Left cardiac atrium (tissue), 4 donors: ENCODE measurements at regions of chr1 and their contacts with region 1.

Region 1: GRCh38 chr1:65002508-65003315 is 36.4 kb upstream of the JAK1 start:
- DNase-seq: peak; percentile 92
- ATAC-seq: peak; percentile 88 to 93

Region 2: DNA sequence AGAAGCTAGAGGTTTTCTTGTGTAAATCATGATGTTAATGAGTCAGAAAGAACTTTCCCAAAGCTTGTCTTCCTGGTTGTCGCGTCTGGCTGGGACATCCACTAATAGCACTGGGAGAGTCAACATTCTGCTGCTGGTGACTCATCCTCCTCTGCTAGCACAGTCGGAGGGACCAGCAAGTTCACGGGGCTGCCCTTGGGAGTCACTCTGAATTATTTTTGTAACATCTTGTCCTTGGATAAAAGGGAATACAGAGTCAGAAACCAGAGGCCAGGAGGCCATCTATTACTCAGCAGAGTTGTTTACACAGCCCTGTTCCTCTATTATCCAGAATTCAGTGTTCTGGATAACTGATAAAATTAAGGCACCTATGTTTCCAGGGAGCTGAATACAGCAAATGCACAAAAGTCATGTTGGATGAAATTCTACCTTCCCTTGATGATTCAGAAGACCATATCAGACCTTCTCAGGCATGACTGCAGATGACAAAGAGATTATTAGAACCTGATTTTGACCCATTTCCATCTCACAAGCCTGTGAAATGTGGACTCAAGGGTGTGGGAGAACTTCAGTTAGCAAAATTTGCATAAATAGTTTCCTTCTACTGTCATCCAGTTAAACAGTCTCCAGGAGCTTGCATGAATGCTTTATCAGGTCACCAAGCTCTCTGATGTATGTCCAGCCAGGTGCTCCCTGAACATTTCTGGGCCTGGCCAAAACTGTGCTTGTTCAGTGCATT is 104.4 kb before region 1 on chr1:
- intact Hi-C with region 1: loop called in 1 of 2 experiments (anchors 5 kb)
- DNase-seq: peak; percentile 88
- ATAC-seq: peak; percentile 94 to 98

Region 3: GRCh38 chr1:64956733-64957441 is 45.8 kb before region 1 on chr1:
- intact Hi-C with region 1: no loop called
- DNase-seq: no peak
- ATAC-seq: peak in 1 of 2 donors; percentile 43